Left ventricle myocardium inferior (tissue), 1 donor: ENCODE measurements at regions of chr12 and their contacts with region 1.

Region 1: DNA sequence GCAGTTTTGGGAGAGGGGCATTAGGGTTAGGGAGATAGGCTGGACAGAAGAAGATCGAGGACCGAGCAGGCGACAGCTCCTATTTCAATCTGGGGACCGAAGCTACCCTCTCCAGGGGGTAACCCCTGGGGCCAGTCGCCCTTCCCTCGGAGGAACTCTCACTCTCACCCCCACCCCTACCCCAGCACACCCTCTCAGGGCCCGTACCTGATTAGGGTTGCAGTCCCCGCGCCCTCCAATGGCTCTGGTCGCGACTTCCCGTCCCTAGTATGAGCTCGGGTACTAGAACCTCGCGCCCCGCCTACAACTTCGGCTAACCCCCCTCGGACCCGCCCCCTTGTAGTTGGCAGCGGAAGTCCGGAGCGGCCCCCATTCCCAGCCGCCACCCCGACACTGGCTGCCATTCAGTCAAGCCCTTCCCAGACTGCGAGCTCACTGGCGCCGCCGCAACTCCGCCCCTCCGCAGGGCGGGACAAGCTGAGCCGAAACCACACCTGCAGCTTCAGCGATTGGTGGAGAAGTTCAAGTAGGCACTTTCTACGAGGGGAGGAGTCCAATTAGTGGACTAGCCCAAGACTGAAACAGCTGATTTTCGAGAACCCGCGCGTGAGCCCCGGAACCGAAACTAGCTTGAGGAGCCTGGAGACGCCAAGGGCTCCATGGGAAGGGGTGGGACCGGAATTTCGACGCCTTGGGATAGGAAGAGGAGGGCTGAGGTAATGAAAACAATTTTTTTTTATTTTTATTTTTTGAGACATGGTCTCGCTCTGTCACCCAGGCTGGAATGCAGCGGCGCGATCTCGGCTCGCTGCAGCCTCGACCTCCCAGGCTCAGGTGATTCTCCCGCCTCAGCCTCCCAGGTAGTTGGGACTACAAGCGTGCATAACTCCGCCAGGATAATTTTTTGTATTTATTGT is at the start of gene STAT2:
- DNase-seq: peak; percentile 99
- H3K4me3 ChIP-seq: peak within 1 kb of the TSS; percentile 82
- H3K27ac ChIP-seq: peak within 1 kb of the TSS; percentile 91
- H3K4me1 ChIP-seq: peaks cover 37% of the 10 kb centered on the region
- H3K27me3 ChIP-seq: no peaks in the 10 kb centered on the region
- CTCF ChIP-seq: no peak
- total RNA-seq, gene STAT2: 34.9 TPM

Region 2: DNA sequence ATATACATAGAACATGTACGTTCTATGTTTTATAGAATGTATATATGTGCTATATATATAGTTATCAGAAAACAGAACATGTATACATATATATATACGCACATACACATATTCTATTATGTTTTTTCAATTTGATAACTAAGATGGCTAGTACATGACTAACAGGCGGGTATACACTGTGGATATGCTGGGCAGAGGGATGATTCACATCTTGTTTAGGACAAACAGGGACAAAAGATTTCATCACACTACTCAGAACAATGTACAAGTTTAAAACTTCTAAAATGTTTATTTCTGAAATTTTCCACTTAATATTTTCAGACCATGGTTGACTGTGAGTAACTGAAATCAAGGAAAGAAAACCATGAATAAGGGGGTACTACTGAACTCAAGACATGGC is 71.7 kb after region 1 on chr12:
- intact Hi-C with region 1: no loop called
- DNase-seq: no peak
- H3K4me3 ChIP-seq: no peak overlapping the region
- H3K27ac ChIP-seq: no peak overlapping the region
- H3K4me1 ChIP-seq: no peaks in the 10 kb centered on the region
- H3K27me3 ChIP-seq: no peaks in the 10 kb centered on the region
- CTCF ChIP-seq: no peak

Region 3: GRCh38 chr12:56448860-56449621 is 88.9 kb after region 1 on chr12 and contains the start of gene TIMELESS:
- intact Hi-C with region 1: loop called (anchors 10 kb)
- DNase-seq: peak; percentile 87
- H3K4me3 ChIP-seq: peak within 1 kb of the TSS; percentile 85
- H3K27ac ChIP-seq: peak within 1 kb of the TSS; percentile 90
- H3K4me1 ChIP-seq: peaks cover 20% of the 10 kb centered on the region
- H3K27me3 ChIP-seq: peaks cover 6% of the 10 kb centered on the region
- CTCF ChIP-seq: peak; percentile 27
- total RNA-seq, gene TIMELESS: 2.2 TPM

Region 4: GRCh38 chr12:56468216-56469006 is 108.3 kb after region 1 on chr12 and contains the start of gene SPRYD4:
- intact Hi-C with region 1: loop called (anchors 10 kb)
- DNase-seq: peak; percentile 93
- H3K4me3 ChIP-seq: peak within 1 kb of the TSS; percentile 85
- H3K27ac ChIP-seq: peak within 1 kb of the TSS; percentile 92
- H3K4me1 ChIP-seq: peaks cover 21% of the 10 kb centered on the region
- H3K27me3 ChIP-seq: no peaks in the 10 kb centered on the region
- CTCF ChIP-seq: peak; percentile 29
- total RNA-seq, gene SPRYD4: 3.6 TPM